Colonic mucosa (tissue), 4 donors: ENCODE measurements at regions of chr5 and their contacts with region 1.

Region 1: GRCh38 chr5:65481635-65482295 is at the start of gene ADAMTS6:
- DNase-seq: peak; percentile 92
- H3K4me3 ChIP-seq: peak within 1 kb of the TSS; percentile 49
- H3K27ac ChIP-seq: peak within 1 kb of the TSS; percentile 73
- H3K4me1 ChIP-seq: peaks cover 3% of the 10 kb centered on the region
- H3K27me3 ChIP-seq: no peaks in the 10 kb centered on the region
- CTCF ChIP-seq: no peak
- total RNA-seq, gene ADAMTS6: 0.12 to 0.77 TPM

Region 2: DNA sequence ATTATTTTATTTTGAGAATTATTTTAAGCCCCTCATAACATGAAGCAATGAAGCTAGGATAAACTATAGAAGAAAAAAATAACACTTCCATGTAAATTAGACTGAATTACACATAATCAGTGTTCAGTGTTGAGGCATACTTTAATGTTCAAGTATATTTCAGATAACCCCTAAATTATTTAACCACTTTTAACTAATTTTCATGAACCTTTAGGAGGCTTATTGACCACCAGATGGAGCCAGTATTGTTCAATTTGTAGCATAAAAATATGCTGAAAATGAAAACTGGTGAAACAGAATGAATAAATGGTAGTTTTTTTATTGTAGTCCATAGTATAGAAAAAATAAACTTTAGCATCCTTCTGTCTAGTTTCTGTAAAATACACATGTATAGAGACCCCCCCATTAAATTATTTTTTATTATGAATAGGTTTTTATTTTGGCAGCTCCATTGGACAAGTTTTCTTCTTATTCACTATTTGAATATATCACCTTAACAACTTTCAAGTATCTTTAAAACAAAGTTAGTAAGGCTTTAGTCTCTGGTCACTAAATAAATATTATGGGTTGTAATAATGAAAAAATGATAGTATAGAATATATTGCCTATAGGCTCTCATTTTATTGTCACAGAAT is 522.9 kb before region 1 on chr5:
- intact Hi-C with region 1: loop called (anchors 5 kb)
- DNase-seq: no peak
- H3K4me3 ChIP-seq: no peak overlapping the region
- H3K27ac ChIP-seq: no peak overlapping the region
- H3K4me1 ChIP-seq: no peaks in the 10 kb centered on the region
- H3K27me3 ChIP-seq: no peaks in the 10 kb centered on the region
- CTCF ChIP-seq: peak; percentile 12

Region 3: DNA sequence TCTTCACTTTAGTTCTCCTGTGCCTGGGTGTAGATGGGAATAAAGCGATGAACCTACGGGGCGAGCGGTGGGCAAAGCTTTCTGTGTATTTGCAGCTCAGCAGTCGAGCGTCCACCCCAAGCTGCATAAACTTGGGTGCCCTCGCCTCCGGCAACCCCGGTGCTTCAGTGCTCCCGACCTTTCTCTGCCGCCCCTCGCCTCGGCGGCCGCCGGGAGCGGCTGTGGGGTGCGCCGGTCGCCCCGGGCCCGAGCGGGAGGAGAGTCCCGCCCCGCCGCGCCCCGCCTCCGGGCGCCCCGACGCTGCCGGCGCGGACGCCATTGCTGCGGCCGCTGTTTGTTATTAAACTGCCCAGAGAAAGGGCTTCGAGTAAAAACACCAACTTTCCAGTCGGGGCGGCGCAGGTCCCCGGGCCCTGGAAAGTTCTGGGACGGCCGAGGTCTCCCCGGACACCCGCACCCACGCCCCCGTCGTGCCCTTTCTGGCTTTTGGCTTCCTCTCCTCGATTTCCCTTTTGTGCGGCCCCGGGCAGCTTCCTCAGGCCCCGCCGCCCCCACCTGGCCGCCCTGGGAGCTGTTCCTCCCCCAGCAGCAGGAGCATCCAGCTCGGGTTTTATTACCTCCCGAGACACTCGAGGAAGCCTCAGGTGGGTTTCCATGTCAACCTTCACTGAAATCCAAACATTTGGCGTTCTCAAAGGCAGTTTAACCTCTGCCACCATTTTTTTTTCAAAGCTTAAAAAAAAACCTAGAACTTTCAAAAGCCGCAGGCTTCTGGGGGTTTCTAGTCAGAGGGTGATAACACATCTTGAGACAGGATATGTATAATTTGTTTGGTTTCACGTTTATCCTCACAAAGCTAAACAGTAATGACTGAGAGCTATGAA is 378.7 kb before region 1 on chr5:
- intact Hi-C with region 1: loop called (anchors 2 kb)
- DNase-seq: peak; percentile 57
- H3K4me3 ChIP-seq: peak overlapping the region; percentile 58
- H3K27ac ChIP-seq: peak overlapping the region; percentile 66
- H3K4me1 ChIP-seq: no peaks in the 10 kb centered on the region
- H3K27me3 ChIP-seq: no peaks in the 10 kb centered on the region
- CTCF ChIP-seq: no peak